GM10248 (cell line): ENCODE measurements at regions of chr2 and their contacts with region 1.

Region 1: DNA sequence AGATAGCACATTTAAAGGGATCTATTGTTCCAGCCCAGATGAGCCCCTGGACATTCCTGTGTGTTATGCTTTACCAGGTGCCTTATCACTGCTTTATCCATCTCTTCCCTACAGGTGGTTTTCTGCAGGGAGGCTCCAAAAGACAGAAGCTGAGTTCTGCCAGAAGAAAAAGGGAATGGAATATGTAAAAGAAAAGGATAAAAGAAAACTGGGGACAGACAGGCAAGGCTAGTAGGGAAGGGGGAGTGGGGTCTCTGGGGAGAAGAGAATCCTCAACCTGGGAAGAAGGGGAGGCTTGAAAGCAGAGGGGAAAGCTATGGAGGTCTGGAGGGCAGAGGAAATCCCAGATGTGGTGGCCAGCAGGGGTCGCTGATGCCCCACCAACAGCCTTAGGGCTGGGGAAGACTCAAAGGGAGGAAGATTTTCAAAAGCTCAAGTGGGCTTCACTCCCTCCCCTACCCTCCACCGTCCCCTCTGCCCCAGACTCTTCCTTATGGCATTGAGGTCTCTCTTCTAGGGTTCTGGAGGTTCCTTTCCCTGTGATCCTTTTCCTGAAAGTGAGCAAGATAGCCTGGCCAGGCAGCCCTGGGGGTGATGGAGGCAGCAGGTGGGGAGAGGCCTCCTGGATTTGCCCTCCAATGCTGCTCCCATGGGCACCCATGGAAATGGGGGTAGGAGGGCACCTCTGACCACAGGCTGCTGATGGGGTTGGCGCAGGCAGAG is 178.1 kb upstream of the PKDCC start:
- DNase-seq: peak; percentile 77
- CTCF ChIP-seq: peak; percentile 76

Region 2: DNA sequence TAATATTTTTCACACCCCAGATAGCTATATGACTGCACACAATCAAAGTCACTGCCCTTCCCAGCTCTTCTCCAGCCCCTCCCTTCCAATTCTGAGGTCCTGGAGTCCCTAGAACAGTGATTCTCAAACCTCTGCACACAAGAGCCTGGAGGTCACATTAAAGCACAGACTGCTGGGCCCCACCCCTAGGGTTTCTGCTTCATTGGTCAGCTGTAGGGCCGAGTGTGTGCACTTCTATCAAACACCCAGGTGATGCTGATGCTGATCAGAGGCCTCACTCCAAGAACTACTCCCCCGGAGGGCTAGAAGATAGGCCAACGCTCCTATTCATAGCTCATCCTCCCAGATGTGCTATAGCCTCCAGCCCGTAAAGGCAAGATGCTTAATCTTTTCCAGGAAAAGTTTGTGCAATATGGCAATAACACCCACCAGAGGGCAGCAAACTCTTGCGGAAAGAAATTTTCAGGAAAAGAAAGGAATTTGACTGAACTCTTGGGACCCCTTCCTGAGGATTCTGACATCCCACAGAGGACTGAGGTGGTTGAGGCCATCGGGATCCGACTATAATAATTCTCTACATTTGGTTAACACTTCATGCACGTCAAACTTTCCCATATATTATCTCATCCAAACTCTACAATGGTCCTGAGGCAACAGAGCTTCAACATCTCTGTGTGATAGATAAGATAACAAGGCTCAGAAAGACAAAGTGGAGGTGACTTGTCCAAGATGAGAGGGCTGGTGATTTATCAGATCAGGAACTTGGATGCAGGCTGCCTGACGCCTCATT is 16.1 kb before region 1 on chr2:
- CTCF ChIA-PET with region 1: interaction called, 168 read pairs
- POLR2A ChIA-PET with region 1: no interaction called
- DNase-seq: no peak
- CTCF ChIP-seq: peak; percentile 59

Region 3: GRCh38 chr2:41896186-41896846 is 26.6 kb after region 1 on chr2:
- CTCF ChIA-PET with region 1: interaction called, 30 read pairs
- POLR2A ChIA-PET with region 1: no interaction called
- DNase-seq: no peak
- CTCF ChIP-seq: no peak

Region 4: DNA sequence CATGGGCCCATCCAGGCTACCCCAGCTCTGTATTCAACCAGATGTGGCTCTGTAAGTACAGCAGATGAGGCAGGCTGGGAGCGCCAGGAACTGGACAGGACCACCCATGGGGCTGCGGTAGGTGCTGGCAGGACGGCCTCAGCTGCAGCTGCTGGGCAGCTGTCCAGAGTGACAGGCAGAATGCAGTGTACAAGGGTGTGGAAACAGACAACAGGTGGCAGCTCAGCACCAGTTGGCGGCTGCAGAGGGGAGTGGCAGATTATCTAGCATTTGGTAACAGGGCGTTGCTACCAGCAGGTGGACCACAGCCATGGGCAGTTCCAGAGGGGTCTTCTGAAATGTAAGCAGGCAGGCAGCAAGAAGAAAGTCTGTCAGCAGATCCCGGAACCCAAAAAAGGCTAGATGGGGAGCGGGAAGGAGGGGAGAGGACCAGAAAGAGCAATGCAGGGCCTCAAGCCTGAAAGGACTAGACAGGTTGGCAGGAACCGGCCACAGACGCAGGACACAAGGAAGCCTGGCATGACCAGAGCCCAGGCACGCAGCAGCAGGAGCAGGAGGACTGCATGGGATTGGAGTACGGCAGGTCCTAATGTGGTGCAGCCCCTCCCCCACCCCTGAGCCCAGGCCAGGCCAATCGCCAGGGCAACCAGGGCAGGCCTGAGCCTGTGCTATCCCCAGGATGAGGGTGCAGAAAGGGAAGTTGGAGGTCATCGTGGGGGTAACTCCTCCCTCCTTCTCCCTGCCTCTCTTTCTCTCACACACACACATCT is 202.8 kb after region 1 on chr2:
- CTCF ChIA-PET with region 1: interaction called, 25 read pairs
- POLR2A ChIA-PET with region 1: no interaction called
- DNase-seq: no peak
- CTCF ChIP-seq: no peak